PC-3 (cell line): ENCODE measurements at regions of chr13 and their contacts with region 1.

Region 1: GRCh38 chr13:75258159-75258782 is 223.7 kb downstream of the TBC1D4 start:
- DNase-seq: peak; percentile 73
- ATAC-seq: peak; percentile 74
- H3K4me3 ChIP-seq: no peak overlapping the region
- H3K27ac ChIP-seq: no peak overlapping the region
- H3K4me1 ChIP-seq: peaks cover 15% of the 10 kb centered on the region
- H3K27me3 ChIP-seq: no peaks in the 10 kb centered on the region
- CTCF ChIP-seq: peak; percentile 75

Region 2: DNA sequence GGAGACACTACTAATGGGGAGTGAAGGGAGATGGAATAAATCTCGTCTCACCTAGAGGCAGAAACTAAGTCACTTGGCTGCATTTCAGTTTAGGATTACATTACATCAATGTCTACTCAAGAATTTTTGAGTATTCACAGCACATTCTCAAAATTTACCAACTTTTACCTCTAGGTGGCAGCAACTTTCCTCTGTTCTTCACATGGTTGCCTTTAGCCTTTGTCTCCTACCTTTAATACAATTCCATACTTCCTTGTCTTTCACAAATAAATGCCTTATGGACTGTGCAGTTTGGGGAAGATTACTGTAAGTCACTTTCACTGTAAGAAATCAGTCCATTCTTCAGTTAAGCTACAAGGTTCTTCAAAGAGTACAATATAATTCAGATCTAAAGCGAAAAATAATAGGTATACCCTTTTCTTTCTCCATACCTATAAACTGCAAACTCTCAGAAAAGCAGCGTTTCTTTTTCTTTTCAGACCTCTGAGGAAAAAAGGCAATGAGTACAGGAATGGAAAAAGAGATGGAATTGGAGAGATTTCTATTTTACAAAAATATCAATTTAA is 1503.5 kb before region 1 on chr13:
- CTCF ChIA-PET with region 1: no interaction called
- POLR2A ChIA-PET with region 1: no interaction called
- intact Hi-C with region 1: loop called (anchors 5 kb)
- DNase-seq: peak; percentile 85
- ATAC-seq: peak; percentile 79
- H3K4me3 ChIP-seq: no peak overlapping the region
- H3K27ac ChIP-seq: no peak overlapping the region
- H3K4me1 ChIP-seq: peaks cover 8% of the 10 kb centered on the region
- H3K27me3 ChIP-seq: no peaks in the 10 kb centered on the region
- CTCF ChIP-seq: peak; percentile 72

Region 3: DNA sequence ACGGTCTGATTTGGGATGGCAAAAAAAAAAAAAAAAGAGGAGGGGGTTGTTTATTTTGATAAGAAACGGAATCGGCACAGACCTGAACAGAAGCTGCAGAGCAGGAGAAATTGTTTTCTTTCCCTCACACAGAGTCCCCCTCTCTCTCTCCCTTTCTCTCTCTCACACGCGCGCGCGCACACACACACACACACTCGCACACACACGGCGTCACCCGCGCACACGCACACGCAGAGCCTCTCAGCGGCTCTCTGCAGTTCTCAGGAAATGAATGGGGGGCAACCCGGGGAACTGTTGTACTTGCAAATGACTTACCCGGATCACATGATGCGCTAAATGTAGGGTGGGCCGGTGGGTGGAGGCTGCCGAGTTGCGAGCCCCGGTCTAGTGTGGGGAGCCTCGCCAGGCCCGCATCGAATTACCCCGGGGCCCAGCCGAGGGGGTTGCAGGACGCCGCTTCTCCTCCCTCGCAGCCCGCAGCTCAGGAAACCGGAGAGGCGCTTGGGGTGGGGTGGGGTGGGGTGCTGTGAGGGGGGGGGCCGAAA is 1124.5 kb before region 1 on chr13:
- CTCF ChIA-PET with region 1: no interaction called
- POLR2A ChIA-PET with region 1: no interaction called
- intact Hi-C with region 1: loop called (anchors 5 kb)
- DNase-seq: peak; percentile 35
- ATAC-seq: peak; percentile 27
- H3K4me3 ChIP-seq: peak overlapping the region; percentile 96
- H3K27ac ChIP-seq: peak overlapping the region; percentile 34; the same call in 1 of the 2 replicates
- H3K4me1 ChIP-seq: peaks cover 39% of the 10 kb centered on the region
- H3K27me3 ChIP-seq: no peaks in the 10 kb centered on the region
- CTCF ChIP-seq: no peak

Region 4: DNA sequence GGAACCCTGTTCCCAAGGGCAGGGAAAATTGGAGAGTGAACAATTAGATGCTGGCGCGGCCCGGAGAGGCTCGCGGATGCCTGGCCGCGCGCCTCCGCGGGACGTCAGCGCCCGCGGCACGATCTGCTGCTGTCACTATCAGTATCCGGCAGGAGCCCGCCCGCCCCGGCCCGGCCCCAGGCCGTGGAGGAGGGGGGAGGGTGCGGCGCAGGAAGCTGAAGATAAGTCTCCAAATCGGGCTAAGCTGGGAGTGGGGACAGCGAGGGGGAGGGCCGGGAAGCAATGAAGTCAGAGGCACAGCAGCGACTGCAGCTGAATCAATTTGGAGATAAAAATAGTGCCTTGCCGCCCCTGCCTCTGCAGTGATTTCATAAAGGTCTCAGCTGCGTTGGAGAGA is 682.5 kb before region 1 on chr13:
- CTCF ChIA-PET with region 1: no interaction called
- POLR2A ChIA-PET with region 1: no interaction called
- intact Hi-C with region 1: loop called (anchors 10 kb)
- DNase-seq: peak; percentile 49
- ATAC-seq: peak; percentile 93
- H3K4me3 ChIP-seq: peak overlapping the region; percentile 66
- H3K27ac ChIP-seq: no peak overlapping the region
- H3K4me1 ChIP-seq: peaks cover 6% of the 10 kb centered on the region; the same call in 1 of the 2 replicates
- H3K27me3 ChIP-seq: no peaks in the 10 kb centered on the region
- CTCF ChIP-seq: no peak

Region 5: DNA sequence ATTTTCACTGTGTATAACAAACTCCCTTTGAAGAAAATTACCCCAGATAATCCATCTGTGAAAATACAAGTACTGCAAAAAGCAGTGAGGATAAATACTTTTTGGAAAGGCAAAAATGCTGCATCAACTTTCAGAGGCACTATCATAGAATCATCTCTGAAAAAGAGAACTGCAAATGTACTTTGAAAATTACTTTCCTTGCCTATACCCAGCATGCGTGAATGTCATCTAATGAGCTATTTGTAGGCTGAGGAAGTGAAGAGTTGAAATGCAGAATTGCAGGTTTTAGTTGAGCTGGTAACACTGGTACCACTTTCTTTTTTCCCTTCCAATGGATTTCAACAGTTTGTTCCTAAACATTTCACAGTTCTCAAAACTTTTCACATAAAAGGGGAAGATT is 27.0 kb after region 1 on chr13:
- CTCF ChIA-PET with region 1: no interaction called
- POLR2A ChIA-PET with region 1: no interaction called
- intact Hi-C with region 1: no loop called
- DNase-seq: no peak
- ATAC-seq: no peak
- H3K4me3 ChIP-seq: no peak overlapping the region
- H3K27ac ChIP-seq: no peak overlapping the region
- H3K4me1 ChIP-seq: no peaks in the 10 kb centered on the region
- H3K27me3 ChIP-seq: no peaks in the 10 kb centered on the region
- CTCF ChIP-seq: no peak

Region 6: GRCh38 chr13:75365724-75366173 is 107.5 kb after region 1 on chr13:
- CTCF ChIA-PET with region 1: no interaction called
- POLR2A ChIA-PET with region 1: no interaction called
- intact Hi-C with region 1: loop called (anchors 2 kb)
- DNase-seq: peak; percentile 92
- ATAC-seq: peak; percentile 90
- H3K4me3 ChIP-seq: peak overlapping the region; percentile 42
- H3K27ac ChIP-seq: peak overlapping the region; percentile 84
- H3K4me1 ChIP-seq: peaks cover 52% of the 10 kb centered on the region
- H3K27me3 ChIP-seq: no peaks in the 10 kb centered on the region
- CTCF ChIP-seq: 0 out of 2 replicates have a peak, but pooled peaks have one; percentile 26

Region 7: DNA sequence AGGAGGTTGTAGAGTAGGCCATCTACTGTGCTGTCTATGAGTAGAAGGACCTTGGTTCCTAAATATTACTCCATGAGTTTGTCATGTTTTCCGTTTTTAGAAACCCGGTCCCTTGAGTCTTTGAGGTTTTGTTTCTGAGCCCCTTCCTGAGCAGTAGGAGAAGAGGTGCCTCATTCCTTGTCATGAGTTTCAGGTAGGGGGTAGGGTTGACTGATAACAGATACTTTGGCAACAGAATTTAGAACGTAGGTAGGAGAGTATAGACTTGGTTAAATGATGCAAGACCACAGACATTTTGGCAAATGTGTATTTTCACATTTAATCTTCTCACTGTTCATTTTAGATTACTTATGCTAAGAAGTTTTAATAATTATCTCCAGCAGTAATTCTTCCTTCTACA is 402.4 kb after region 1 on chr13:
- CTCF ChIA-PET with region 1: no interaction called
- POLR2A ChIA-PET with region 1: no interaction called
- intact Hi-C with region 1: no loop called
- DNase-seq: no peak
- ATAC-seq: no peak
- H3K4me3 ChIP-seq: no peak overlapping the region
- H3K27ac ChIP-seq: no peak overlapping the region
- H3K4me1 ChIP-seq: no peaks in the 10 kb centered on the region
- H3K27me3 ChIP-seq: no peaks in the 10 kb centered on the region
- CTCF ChIP-seq: no peak